ENCODE measurements at regions of chr7 and their contacts with region 1.

Region 1: GRCh38 chr7:37448636-37449361 is at the start of gene ELMO1:
- DNase-seq: peak; percentile 92 to 97 (median 95)
- H3K4me3 ChIP-seq: peak within 1 kb of the TSS; percentile 83 to 91 (median 86)
- H3K27ac ChIP-seq: peak within 1 kb of the TSS; percentile 62 to 80
- H3K4me1 ChIP-seq: peaks cover 13 to 36% (median 27%) of the 10 kb centered on the region in 4 experiments
- H3K27me3 ChIP-seq: no peaks in the 10 kb centered on the region

Region 2: DNA sequence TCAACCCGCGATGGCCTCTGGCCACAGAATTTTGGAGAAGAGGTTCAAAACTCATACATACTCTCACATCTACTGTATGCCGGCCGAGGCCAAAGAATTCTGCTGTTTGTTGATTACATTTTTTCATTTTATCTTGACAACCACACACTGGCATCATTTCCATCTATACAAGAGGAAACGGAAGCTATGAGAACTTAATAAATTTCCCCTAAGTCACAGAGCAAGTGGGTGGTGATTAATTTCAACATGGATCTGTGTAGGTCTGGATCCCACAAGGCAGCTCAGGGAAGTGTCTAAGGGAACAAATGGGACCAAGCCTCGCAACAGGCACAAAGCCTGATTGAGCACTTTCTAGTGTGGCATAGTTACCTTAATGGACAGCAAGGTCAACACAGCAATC is 18.2 kb before region 1 on chr7:
- CTCF ChIA-PET with region 1: interaction called, 26 read pairs
- POLR2A ChIA-PET with region 1: interaction called, 7 read pairs
- DNase-seq: peak; percentile 76 to 90 (median 86)
- H3K4me3 ChIP-seq: peak overlapping the region in 2 of 7 experiments; percentile 0 to 1
- H3K27ac ChIP-seq: peak overlapping the region in 1 of 2 experiments; percentile 45
- H3K4me1 ChIP-seq: peaks cover 9 to 83% (median 38%) of the 10 kb centered on the region in 4 experiments
- H3K27me3 ChIP-seq: no peaks in the 10 kb centered on the region